ENCODE measurements at regions of chr5 and their contacts with region 1.

Region 1: GRCh38 chr5:163619951-163620350 is 114.5 kb downstream of the MAT2B start:
- DNase-seq: no peak
- ATAC-seq: no peak
- H3K4me3 ChIP-seq: no peak overlapping the region
- H3K27ac ChIP-seq: no peak overlapping the region
- H3K4me1 ChIP-seq: no peaks in the 10 kb centered on the region
- H3K27me3 ChIP-seq: peaks cover 0 to 4% (median 0%) of the 10 kb centered on the region in 7 donors
- CTCF ChIP-seq: no peak

Region 2: DNA sequence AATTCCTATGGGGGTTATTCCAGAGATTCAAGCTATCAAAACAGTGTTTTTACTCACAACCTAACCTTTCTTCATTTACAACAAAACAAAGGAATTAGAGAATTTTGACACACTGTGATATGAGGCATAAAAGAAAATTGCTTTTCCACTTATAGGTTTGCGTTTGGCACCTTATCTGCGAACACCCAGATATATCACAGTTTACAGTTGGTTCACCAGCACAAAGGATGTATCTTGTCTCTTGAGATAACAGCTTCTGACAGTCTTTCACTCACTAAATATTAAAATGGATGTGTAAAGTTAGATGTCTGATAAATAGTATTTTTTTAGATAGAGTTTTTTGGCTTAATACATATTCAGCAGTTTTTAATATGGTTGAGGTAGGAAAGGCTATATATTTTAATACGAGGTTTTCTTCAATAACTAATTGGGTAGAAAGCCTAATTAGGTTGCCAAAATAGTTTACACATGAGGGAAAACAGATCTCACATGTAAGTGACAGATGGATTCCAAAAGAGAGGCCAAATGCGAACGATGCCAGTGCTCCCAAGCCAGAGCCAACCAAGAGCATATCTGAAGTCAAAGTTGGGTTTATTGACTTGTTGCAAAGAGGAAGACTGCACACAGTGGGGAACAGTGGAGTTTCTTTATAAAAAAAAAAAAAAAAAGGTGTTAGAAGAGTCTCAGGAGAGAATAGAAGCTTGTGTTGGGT is 1380.7 kb after region 1 on chr5:
- intact Hi-C with region 1: loop called in 1 of 10 experiments (anchors 10 kb)
- DNase-seq: no peak
- ATAC-seq: no peak
- H3K4me3 ChIP-seq: no peak overlapping the region
- H3K27ac ChIP-seq: no peak overlapping the region
- H3K4me1 ChIP-seq: no peaks in the 10 kb centered on the region
- H3K27me3 ChIP-seq: no peaks in the 10 kb centered on the region
- CTCF ChIP-seq: no peak

Measured in heart right ventricle (tissue), 16 donors.